K562 (cell line): ENCODE measurements at regions of chr6 and their contacts with region 1.

Region 1: DNA sequence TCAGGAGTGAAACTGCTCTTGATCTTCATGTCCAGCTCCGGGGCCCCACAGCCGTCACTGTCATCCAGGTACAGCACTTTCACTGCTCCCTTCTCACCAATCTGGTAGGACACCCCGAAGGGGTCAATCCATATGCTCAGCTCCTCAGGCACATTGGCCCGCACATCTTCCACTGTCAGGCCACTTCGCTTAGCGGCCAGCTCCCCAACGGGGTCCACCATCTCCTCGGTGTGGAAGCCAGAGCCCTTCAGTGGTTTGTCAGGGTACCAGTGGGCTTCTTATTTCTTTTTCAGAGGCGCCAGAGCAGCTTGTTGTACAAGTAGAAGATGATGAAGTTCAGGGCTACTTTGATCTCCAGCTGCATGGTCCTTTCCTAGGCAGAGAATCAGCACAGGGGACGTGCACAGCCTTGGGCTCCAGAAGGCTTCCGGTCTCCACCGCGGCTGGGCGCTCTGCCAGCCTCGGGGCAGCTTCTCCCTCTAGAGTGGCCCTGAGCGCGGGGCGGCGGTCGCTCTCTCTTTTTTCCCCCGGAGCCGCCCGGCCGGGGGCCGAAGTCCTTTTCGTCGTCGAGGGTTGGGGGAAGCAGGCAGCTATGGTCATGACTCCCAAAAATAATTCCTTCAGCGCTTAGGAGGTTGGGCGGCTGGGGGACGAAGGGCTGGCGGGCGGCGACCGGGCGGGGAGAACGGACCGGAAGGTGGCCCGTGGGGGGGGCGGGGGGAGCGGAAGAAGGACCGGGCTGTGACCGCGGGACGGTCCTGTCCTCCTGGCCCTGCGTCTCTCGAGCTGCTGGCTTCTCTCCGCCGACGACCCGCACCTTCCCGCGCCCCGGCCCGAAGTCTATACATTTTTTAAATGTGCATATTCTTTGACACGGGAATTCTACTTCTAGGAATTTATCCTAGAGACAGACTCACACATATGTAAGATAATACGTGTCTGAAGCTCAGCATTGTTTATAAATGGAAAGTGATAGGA is 6.5 kb upstream of the ZSCAN9 start:
- DNase-seq: peak; percentile 89 to 95 (median 92)
- ATAC-seq: peak; percentile 84
- H3K4me3 ChIP-seq: peak overlapping the region; percentile 62
- H3K27ac ChIP-seq: peak overlapping the region; percentile 81
- H3K4me1 ChIP-seq: peaks cover 33 to 44% of the 10 kb centered on the region in 2 experiments
- H3K27me3 ChIP-seq: no peaks in the 10 kb centered on the region
- CTCF ChIP-seq: peak in 2 of 3 experiments; percentile 13 to 32; a peak in 1 of 6 replicates
- EP300 ChIP-seq: peak; percentile 36; the same call in 1 of the 2 replicates
- POLR2A ChIP-seq: peak; percentile 82
- RAD21 ChIP-seq: no peak; a peak in 1 of 4 replicates

Region 2: GRCh38 chr6:28232785-28233184 is 14.2 kb after region 1 on chr6:
- CTCF ChIA-PET with region 1: no interaction called
- POLR2A ChIA-PET with region 1: interaction called, 10 read pairs
- in situ Hi-C with region 1: no loop called
- intact Hi-C with region 1: no loop called
- DNase-seq: no peak
- ATAC-seq: peak; percentile 29
- H3K4me3 ChIP-seq: no peak overlapping the region
- H3K27ac ChIP-seq: no peak overlapping the region
- H3K4me1 ChIP-seq: peaks cover 0 to 4% of the 10 kb centered on the region in 2 experiments; a peak in 1 of 5 replicates
- H3K27me3 ChIP-seq: no peaks in the 10 kb centered on the region
- CTCF ChIP-seq: no peak
- EP300 ChIP-seq: no peak
- POLR2A ChIP-seq: no peak
- RAD21 ChIP-seq: no peak

Region 3: GRCh38 chr6:28311139-28311823 is 92.7 kb after region 1 on chr6:
- CTCF ChIA-PET with region 1: no interaction called
- POLR2A ChIA-PET with region 1: no interaction called
- in situ Hi-C with region 1: no loop called
- intact Hi-C with region 1: no loop called
- DNase-seq: no peak
- ATAC-seq: peak; percentile 56; the same call in 2 of the 3 replicates
- H3K4me3 ChIP-seq: no peak overlapping the region
- H3K27ac ChIP-seq: no peak overlapping the region
- H3K4me1 ChIP-seq: peaks cover 6 to 13% of the 10 kb centered on the region in 2 experiments; a peak in 4 of 5 replicates
- H3K27me3 ChIP-seq: no peaks in the 10 kb centered on the region
- CTCF ChIP-seq: no peak
- EP300 ChIP-seq: no peak
- POLR2A ChIP-seq: no peak
- RAD21 ChIP-seq: no peak